Mammary epithelial cell (primary cell): ENCODE measurements at regions of chr2 and their contacts with region 1.

Region 1: DNA sequence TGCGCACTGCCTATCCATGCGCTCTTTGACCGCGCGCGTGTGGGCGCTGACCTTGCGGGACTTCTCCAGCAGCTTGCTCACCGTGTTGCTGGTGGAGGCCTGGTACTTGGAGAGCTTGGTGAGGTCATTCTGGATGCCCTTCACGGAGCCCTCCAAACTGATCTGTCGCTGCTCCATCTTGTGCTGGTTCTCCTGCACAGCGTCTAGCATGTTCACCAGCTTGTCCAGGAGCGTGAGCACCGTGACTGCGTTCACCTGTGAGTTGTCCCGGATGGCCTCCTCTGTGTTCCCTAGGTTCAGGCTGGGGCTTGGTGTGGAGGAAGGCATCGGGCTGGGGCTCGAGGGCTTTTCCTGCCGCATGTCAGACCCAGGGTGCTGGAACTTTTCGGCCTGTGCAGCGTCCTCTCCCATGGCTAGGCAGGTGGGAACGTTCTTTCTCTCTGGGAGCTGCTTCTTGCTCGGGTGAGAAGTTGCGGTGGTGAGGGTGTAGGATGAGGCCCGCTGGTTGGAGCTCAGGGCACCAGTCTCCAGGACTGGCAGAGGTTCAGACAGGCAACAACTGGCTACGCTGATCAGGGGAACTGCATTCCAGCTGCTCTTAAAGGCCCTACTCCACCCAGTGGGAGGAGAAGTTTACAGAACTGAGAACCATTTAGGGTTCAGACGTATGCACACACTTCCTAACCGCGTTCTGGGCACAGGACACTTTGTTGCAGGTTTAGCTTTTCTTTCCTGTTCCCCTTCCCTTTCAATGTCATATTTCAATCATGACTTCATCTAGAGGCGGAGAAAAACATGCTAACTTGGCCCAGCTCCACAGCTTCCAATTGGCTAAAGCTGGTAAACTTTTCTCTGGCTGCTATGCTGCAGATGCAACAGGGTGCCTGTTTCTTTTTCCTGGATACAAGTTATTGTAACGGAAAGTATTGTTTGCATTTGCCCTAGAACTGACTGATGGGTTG is at the start of gene CAVIN2:
- DNase-seq: peak; percentile 84
- H3K4me3 ChIP-seq: peak within 1 kb of the TSS; percentile 60 to 71 (median 65)
- H3K27ac ChIP-seq: peak within 1 kb of the TSS; percentile 53
- H3K4me1 ChIP-seq: peaks cover 31% of the 10 kb centered on the region
- H3K27me3 ChIP-seq: no peaks in the 10 kb centered on the region
- CTCF ChIP-seq: peak in 1 of 2 donors; percentile 13
- total RNA-seq, gene CAVIN2: 9.4 to 10.2 TPM

Region 2: DNA sequence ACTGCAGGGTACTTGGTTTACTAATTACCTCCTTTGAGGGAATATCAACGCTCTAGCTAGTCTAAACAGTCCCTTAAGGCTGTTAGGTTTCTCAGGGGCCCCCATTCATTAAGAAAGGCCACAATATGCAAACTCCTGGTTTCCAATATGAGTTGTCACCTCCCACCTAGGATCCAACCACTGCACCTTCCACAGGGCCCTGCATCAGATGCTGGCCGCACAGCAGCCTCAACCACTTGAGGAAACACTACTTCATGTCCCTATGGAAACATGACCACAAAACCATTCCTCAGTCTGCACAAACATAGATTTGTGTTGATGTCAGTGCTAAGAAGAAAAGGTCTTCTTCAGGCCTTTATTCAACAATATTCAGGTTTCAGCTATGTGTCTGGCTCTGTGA is 736.9 kb before region 1 on chr2:
- CTCF ChIA-PET with region 1: no interaction called
- dilution Hi-C with region 1: no loop called
- in situ Hi-C with region 1: no loop called
- intact Hi-C with region 1: no loop called
- DNase-seq: no peak
- H3K4me3 ChIP-seq: no peak overlapping the region
- H3K27ac ChIP-seq: no peak overlapping the region
- H3K4me1 ChIP-seq: peaks cover 6% of the 10 kb centered on the region
- H3K27me3 ChIP-seq: no peaks in the 10 kb centered on the region
- CTCF ChIP-seq: no peak

Region 3: GRCh38 chr2:191748059-191748461 is 98.7 kb before region 1 on chr2:
- CTCF ChIA-PET with region 1: no interaction called
- dilution Hi-C with region 1: no loop called
- in situ Hi-C with region 1: no loop called
- intact Hi-C with region 1: no loop called
- DNase-seq: no peak
- H3K4me3 ChIP-seq: no peak overlapping the region
- H3K27ac ChIP-seq: no peak overlapping the region
- H3K4me1 ChIP-seq: peaks cover 24% of the 10 kb centered on the region
- H3K27me3 ChIP-seq: no peaks in the 10 kb centered on the region
- CTCF ChIP-seq: no peak

Region 4: DNA sequence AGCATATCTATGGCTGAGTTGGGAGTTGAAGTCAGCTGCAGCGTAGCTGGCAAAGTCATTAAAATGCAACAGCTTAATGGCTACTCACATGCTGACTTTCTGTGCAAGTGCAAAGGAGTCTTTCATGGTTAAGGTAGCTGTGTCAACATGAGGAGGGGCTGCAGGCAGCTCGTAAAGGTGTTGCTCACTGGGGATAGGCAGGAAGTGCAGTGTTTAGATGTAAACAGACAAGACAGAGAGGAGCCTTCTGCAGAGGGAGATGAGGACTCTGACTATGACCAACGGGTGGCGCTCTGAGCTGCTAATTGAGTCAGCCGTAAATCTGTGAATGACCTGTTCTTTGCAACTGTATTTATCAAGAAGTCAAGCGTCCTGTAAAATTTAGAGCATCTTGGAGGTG is 22.4 kb after region 1 on chr2:
- CTCF ChIA-PET with region 1: interaction called, 4 read pairs
- dilution Hi-C with region 1: no loop called
- in situ Hi-C with region 1: no loop called
- intact Hi-C with region 1: loop called (anchors 2 kb)
- DNase-seq: no peak
- H3K4me3 ChIP-seq: no peak overlapping the region
- H3K27ac ChIP-seq: no peak overlapping the region
- H3K4me1 ChIP-seq: peaks cover 37% of the 10 kb centered on the region
- H3K27me3 ChIP-seq: no peaks in the 10 kb centered on the region
- CTCF ChIP-seq: peak; percentile 15 to 44

Region 5: GRCh38 chr2:191894681-191895147 is 47.9 kb after region 1 on chr2:
- CTCF ChIA-PET with region 1: no interaction called
- dilution Hi-C with region 1: no loop called
- in situ Hi-C with region 1: no loop called
- intact Hi-C with region 1: loop called (anchors 5 kb)
- DNase-seq: peak; percentile 86
- H3K4me3 ChIP-seq: no peak overlapping the region
- H3K27ac ChIP-seq: peak overlapping the region; percentile 61
- H3K4me1 ChIP-seq: peaks cover 40% of the 10 kb centered on the region
- H3K27me3 ChIP-seq: no peaks in the 10 kb centered on the region
- CTCF ChIP-seq: no peak

Region 6: GRCh38 chr2:191942090-191942738 is 95.4 kb after region 1 on chr2:
- CTCF ChIA-PET with region 1: no interaction called
- dilution Hi-C with region 1: no loop called
- in situ Hi-C with region 1: no loop called
- intact Hi-C with region 1: loop called (anchors 5 kb)
- DNase-seq: peak; percentile 61
- H3K4me3 ChIP-seq: peak overlapping the region in 1 of 3 experiments; percentile 22
- H3K27ac ChIP-seq: no peak overlapping the region
- H3K4me1 ChIP-seq: peaks cover 21% of the 10 kb centered on the region
- H3K27me3 ChIP-seq: no peaks in the 10 kb centered on the region
- CTCF ChIP-seq: no peak

Region 7: DNA sequence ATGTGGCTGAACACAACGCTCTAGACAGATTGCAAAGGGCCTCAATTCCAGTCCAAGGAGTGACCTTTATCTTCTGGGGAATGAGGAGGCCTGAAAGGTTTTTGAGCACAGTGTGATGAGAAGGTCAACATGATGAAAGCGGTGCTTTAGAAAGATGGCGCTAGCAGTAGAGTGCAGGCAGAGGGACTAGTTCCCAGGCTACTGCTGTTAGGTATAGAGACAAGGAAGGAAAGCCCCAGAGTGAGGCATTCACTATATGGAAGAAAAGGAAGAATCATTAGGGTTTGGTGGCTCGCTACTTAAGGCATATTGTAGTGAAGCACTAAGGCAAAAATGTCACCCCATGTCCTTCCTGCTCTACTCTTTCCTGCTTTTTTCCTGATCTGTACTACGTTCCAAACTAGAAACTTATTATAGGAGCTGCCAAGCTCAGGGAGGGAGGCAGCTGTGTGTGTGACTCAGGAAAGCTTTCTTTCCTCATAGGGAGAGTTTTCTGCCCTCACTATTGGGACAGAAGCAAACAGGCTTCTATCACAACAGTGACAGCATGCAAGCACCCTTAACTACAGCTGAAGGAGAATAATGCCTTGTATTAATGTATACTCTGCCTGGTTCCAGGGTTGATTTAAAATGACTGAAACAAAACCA is 160.9 kb after region 1 on chr2:
- CTCF ChIA-PET with region 1: no interaction called
- dilution Hi-C with region 1: no loop called
- in situ Hi-C with region 1: no loop called
- intact Hi-C with region 1: no loop called
- DNase-seq: no peak
- H3K4me3 ChIP-seq: no peak overlapping the region
- H3K27ac ChIP-seq: no peak overlapping the region
- H3K4me1 ChIP-seq: no peaks in the 10 kb centered on the region
- H3K27me3 ChIP-seq: no peaks in the 10 kb centered on the region
- CTCF ChIP-seq: no peak